ENCODE measurements at regions of chr16 and their contacts with region 1.

Region 1: DNA sequence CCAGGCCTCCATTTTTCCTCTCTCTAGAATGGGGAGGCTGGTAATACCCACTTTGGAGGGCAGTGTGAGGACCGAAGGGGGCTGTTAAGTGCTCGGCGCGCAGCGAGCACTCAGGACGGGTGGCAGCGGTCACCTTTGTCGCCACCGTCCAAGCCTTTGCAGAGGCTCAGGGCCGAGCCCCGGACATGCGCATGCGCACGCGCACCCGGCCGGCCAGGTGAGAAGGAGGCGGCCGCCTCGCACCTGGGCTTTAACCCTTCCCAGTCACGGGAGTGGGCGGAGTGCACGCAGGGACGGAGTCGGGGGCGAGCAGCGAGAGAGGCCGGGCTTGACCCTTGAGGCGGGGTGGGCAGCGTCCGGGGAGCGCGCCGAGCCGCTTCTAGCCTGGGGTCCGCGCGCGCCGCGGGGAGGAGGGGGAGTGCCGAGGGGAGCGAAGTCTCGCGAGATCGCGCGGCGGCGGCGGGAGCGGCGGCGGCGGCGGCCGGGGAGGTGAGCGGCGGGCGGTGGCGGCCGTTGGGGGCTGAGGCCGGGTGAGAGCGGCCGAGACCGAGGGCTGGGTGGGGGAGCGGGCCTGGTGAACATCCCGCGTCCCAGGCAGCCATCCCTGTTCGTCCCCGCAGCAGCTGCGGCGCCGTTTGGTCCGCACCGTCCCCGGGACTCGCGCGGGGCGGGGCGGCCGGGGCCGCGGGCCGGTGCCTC is at the start of gene MRTFB:
- DNase-seq: peak; percentile 77
- H3K4me3 Mint-ChIP-seq: peak within 1 kb of the TSS; percentile 85
- H3K27ac Mint-ChIP-seq: peak within 1 kb of the TSS; percentile 72
- H3K4me1 Mint-ChIP-seq: peaks cover 9% of the 10 kb centered on the region
- H3K27me3 Mint-ChIP-seq: peaks cover 2% of the 10 kb centered on the region
- total RNA-seq, gene MRTFB: 13.7 and 14.6 TPM in 2 replicates

Region 2: DNA sequence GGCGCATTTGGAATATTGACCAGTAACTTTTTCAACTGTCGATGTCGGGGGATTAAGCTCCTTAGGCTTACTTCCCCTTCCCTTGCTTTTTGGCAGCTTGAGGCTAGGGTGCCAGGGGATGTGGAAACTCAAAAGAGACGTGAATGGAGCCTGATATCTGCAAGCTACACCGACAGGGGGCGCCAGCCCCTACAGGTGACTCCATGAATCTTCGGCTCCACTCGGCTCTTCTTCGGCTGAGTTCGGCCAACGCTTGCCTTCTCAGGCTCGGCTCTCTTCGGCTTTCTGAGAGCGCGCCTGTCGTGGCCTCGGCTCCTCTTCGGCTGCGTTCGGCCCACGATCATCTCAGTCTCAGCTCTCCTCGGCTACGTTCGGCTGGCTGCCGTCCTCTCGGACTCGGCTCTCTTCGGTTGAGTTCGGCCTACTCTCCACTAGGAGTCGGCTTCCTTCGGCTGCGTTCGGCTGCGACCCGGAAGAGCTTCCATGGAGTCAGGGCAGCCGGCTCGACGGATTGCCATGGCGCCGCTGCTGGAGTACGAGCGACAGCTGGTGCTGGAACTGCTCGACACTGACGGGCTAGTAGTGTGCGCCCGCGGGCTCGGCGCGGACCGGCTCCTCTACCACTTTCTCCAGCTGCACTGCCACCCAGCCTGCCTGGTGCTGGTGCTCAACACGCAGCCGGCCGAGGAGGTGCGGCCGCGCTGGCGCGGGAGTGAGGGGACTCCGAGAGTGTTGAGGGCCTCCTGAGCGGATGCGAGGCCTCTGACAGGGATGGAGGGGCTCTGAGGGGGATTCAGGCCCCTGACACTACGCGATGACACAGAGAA is 151.1 kb before region 1 on chr16 and contains the start of gene ERCC4:
- intact Hi-C with region 1: loop called (anchors 5 kb)
- DNase-seq: peak; percentile 99
- H3K4me3 Mint-ChIP-seq: peak within 1 kb of the TSS; percentile 99
- H3K27ac Mint-ChIP-seq: peak within 1 kb of the TSS; percentile 94
- H3K4me1 Mint-ChIP-seq: peaks cover 22% of the 10 kb centered on the region
- H3K27me3 Mint-ChIP-seq: peaks cover 7% of the 10 kb centered on the region
- total RNA-seq, gene ERCC4: 11.9 and 13.3 TPM in 2 replicates

Measured in activated T-helper 2 cell treated with anti-CD3 and anti-CD28 coated beads, Interferon-gamma antibody, Interleukin-2, Interleukin-4, amounts not matched to agents 10 μg/mL and 5 μg/mL and 100 μg/mL, durations not matched to agents 14 hours and 24 hours and 36 hours (primary cell).